GM18951 (cell line): ENCODE measurements at regions of chr6 and their contacts with region 1.

Region 1: DNA sequence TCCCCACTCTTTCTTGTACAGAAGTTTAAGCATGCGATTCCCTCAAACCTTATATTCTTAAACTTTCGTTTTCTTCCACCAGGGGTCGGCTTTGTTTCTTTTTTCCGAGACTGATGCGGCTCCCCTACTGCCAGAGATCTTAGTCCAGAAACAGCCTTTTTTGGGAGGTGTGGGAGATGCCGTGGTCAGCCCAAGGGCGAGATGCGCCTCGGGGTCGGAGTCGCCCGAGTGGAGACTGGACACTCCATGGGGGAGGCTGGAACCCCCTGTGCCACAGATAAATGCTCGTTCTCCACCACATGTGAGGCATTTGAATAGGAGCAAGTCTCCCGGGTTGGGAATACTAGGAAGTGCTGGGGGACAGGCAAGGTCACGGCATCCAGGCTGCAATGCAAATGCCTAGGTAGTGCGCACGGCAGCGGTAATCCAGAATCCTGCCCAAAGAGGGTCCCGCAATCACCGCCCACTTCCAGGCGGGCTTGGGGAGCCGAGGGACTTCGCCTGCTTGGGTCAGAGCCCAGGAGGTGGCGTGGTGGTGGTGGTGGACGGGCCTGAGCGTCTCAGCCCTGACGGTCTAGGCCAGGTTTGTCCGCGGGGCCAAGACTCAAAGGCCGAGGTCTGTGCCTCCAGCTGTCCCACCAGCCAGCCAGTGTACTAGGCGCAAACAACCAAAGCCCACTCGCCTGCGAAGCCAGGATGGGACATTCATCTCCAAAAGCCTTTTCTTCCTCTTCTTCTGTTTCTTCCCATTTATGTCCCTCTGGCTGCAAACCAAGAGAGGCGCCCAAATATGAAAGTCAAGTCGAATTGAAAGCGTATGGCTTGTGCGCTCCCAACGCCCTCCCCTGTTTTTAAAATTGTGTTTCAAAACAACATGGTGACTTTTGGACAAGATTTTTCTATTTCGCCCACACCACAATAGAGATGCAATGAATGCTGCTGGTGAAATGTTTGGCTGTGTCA is 39.3 kb upstream of the OSTM1 start:
- POLR2A ChIP-seq: no peak

Region 2: DNA sequence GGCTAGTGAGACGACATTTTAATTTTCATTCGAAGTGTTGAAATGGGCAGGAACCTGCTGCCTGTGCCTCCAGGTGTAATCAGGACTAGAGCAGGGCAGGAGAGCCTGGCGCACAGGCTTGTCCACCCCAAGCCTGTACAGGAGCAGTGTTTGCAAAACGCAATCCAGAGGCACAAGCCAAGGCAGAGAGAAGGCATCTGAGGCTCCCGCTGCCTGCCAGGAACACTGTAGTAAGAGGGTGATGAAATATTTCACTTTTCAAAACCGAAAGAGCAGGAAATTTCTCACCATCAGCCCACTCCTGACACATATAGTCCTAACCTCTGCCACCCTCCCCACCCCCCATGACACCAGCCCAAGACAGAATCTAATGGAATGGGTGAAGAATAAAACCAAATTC is 1617.0 kb before region 1 on chr6:
- in situ Hi-C with region 1: no loop called
- POLR2A ChIP-seq: no peak

Region 3: DNA sequence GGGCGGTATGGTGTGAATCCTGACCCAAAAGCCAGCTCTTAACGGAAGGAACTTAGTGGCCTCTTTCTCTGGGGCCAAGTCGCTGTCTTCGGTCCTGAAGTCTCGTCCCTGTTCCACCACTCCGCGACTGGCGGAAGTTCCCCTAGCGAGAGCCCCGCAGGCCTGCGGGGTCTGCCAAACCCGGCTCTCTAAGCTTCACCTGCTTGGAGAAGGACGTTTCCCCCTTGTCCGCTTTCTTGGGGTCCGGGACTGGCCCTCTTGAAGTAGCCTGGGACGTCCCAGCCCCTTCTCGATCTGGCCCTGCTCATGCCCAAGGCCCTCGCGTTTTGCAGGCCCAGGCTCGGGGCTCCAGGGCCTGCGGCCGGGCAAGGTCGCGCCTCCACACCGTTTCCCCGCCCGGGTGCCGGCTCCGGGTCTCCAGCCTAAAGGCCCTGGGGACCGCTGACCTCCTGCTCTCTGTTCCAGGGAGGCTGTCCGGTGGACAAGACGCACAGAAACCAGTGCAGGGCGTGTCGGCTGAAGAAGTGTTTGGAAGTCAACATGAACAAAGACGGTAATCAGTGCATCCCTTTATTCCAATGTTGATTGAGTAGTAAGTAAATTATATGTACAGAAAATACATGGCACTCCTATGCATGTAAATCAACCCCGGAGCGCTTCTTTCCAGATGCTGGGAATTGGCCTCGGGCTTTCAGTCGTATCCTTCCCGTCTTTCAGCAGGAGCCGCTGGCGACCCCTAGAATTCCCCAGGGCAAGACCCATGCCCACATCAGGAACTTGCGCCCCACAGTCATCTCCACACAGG is 60.7 kb after region 1 on chr6:
- in situ Hi-C with region 1: loop called (anchors 10 kb)
- POLR2A ChIP-seq: no peak

Region 4: GRCh38 chr6:108492131-108492766 is 378.4 kb after region 1 on chr6:
- in situ Hi-C with region 1: loop called (anchors 25 kb)
- POLR2A ChIP-seq: no peak